Left lung (tissue), 14 donors: ENCODE measurements at regions of chr16 and their contacts with region 1.

Region 1: GRCh38 chr16:11715246-11715947 is 27.3 kb downstream of the TXNDC11 start:
- DNase-seq: no peak
- ATAC-seq: no peak
- H3K4me3 ChIP-seq: no peak overlapping the region
- H3K27ac ChIP-seq: no peak overlapping the region
- H3K4me1 ChIP-seq: peaks cover 0 to 32% of the 10 kb centered on the region in 2 donors
- H3K27me3 ChIP-seq: no peaks in the 10 kb centered on the region
- CTCF ChIP-seq: no peak

Region 2: DNA sequence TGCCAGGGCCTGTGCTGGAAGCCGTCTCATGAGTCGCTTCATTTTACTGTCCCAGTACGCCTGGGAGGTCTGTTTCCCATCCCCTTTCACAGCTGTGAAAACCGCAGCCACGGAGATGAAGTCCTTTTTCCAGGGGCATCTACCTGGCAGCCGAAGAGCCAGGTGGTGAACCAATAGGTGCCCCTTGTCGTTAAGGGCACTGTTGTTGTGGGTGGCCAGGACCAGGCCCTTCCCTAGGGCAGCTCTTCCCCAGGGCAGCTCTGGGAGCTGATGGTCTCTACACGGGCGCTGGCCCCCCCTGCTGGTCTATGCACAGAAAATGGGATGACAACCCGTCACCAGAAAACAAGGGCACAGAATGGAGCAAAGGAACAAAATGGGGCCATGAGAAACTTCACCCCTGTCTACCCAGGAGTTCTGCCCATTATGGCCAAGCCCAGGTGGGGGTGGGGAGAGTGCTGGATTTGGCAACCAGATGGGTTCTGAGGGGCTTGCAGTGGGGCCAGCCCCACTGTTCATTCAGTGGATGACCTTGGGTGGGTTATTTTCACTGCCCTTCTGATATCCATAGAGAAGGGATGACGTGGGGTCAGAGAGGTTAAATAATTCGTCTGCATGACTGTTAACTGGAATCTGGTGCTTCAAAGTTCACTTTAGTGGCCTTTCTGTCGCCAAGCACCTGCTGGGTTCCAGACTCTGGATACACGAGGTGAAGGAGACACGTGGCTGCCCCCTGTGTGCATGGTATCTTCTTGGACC is 358.6 kb before region 1 on chr16:
- intact Hi-C with region 1: no loop called
- DNase-seq: peak; percentile 57 to 86 (median 80)
- ATAC-seq: peak; percentile 85
- H3K4me3 ChIP-seq: no peak overlapping the region
- H3K27ac ChIP-seq: no peak overlapping the region
- H3K4me1 ChIP-seq: peaks cover 14 to 52% of the 10 kb centered on the region in 2 donors
- H3K27me3 ChIP-seq: peaks cover 0 to 37% of the 10 kb centered on the region in 2 donors
- CTCF ChIP-seq: peak; percentile 57 to 66

Region 3: DNA sequence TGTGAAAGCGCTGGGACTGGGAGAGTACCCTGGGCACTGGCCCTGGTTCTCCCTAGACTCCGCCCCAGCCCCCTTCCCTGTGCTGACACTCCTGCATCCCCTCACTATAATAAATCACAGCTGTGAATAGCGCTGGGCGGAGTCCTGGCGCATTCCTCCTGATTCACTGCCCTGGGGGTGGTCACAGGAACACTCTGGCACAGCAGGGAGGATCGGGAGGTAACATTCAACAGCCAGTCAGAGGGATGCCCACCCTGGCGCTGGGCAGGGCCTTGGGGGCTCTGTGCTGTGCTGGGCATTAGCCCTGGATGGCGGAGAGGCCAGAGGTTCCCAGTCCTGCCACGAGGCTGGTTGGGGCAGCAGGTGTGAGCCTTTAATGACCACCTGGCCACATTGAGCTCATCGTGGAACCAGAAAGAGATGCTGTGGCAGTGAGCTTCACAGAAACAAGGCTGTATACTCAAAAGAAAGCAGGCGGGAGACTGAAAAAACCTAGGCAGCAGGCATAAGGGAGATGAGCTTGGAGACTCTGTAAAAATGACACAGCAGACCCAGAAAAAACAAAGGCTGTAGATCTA is 324.4 kb before region 1 on chr16:
- intact Hi-C with region 1: loop called in 1 of 2 experiments (anchors 5 kb)
- DNase-seq: no peak
- ATAC-seq: peak; percentile 2
- H3K4me3 ChIP-seq: no peak overlapping the region
- H3K27ac ChIP-seq: peak overlapping the region in 1 of 2 donors; percentile 1
- H3K4me1 ChIP-seq: peaks cover 5 to 10% of the 10 kb centered on the region in 2 donors
- H3K27me3 ChIP-seq: peaks cover 0 to 8% of the 10 kb centered on the region in 2 donors
- CTCF ChIP-seq: no peak

Region 4: DNA sequence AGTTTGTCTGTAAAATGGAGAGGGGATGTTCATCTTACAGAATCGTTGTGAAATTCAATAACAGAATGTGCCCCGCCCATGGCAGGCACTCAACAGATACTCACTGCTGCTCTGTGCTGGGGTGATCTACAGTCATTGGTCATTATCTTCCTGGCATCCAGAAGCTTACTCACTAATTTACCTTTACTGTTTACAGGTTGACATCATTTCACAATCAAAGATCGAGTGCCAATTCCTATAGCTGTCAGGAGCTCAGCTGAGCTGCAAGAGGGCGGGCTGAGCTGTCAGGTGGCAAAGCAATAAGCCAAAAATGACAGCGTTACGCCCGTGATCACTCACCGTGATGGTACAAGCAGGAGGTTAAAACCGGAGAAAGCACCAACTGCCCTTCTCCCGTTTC is 179.9 kb before region 1 on chr16:
- intact Hi-C with region 1: loop called in 1 of 2 experiments (anchors 5 kb)
- DNase-seq: no peak
- ATAC-seq: no peak
- H3K4me3 ChIP-seq: no peak overlapping the region
- H3K27ac ChIP-seq: no peak overlapping the region
- H3K4me1 ChIP-seq: peaks cover 0 to 4% of the 10 kb centered on the region in 2 donors
- H3K27me3 ChIP-seq: no peaks in the 10 kb centered on the region
- CTCF ChIP-seq: no peak

Region 5: GRCh38 chr16:11597239-11598101 is 117.9 kb before region 1 on chr16:
- intact Hi-C with region 1: no loop called
- DNase-seq: peak in 1 of 4 donors; percentile 73
- ATAC-seq: peak; percentile 91
- H3K4me3 ChIP-seq: no peak overlapping the region
- H3K27ac ChIP-seq: peak overlapping the region; percentile 58 to 95
- H3K4me1 ChIP-seq: peaks cover 10 to 44% of the 10 kb centered on the region in 2 donors
- H3K27me3 ChIP-seq: no peaks in the 10 kb centered on the region
- CTCF ChIP-seq: no peak